Right cardiac atrium (tissue), 5 donors: ENCODE measurements at regions of chr14 and their contacts with region 1.

Region 1: GRCh38 chr14:29721586-29721985 is 206.1 kb downstream of the PRKD1 start:
- DNase-seq: no peak
- ATAC-seq: no peak
- H3K4me3 ChIP-seq: no peak overlapping the region
- H3K27ac ChIP-seq: no peak overlapping the region
- H3K4me1 ChIP-seq: peaks cover 5% of the 10 kb centered on the region
- H3K27me3 ChIP-seq: no peaks in the 10 kb centered on the region

Region 2: GRCh38 chr14:29741909-29742401 is 20.4 kb after region 1 on chr14:
- intact Hi-C with region 1: loop called in 1 of 4 experiments (anchors 2 kb)
- DNase-seq: peak in 2 of 3 donors; percentile 23 to 59
- ATAC-seq: peak; percentile 84 to 93
- H3K4me3 ChIP-seq: no peak overlapping the region
- H3K27ac ChIP-seq: no peak overlapping the region
- H3K4me1 ChIP-seq: peaks cover 12% of the 10 kb centered on the region
- H3K27me3 ChIP-seq: no peaks in the 10 kb centered on the region

Region 3: GRCh38 chr14:29773990-29774389 is 52.4 kb after region 1 on chr14:
- intact Hi-C with region 1: no loop called
- DNase-seq: no peak
- ATAC-seq: no peak
- H3K4me3 ChIP-seq: no peak overlapping the region
- H3K27ac ChIP-seq: no peak overlapping the region
- H3K4me1 ChIP-seq: no peaks in the 10 kb centered on the region
- H3K27me3 ChIP-seq: no peaks in the 10 kb centered on the region

Region 4: GRCh38 chr14:29892327-29892726 is 170.7 kb after region 1 on chr14:
- intact Hi-C with region 1: no loop called
- DNase-seq: no peak
- ATAC-seq: no peak
- H3K4me3 ChIP-seq: no peak overlapping the region
- H3K27ac ChIP-seq: no peak overlapping the region
- H3K4me1 ChIP-seq: peaks cover 3% of the 10 kb centered on the region
- H3K27me3 ChIP-seq: no peaks in the 10 kb centered on the region